HEK293 (cell line): ENCODE measurements at regions of chr17 and their contacts with region 1.

Region 1: GRCh38 chr17:59707114-59707970 is at the starts of genes PTRH2 and VMP1:
- H3K4me3 ChIP-seq: peak within 1 kb of the TSS; percentile 95
- H3K27ac ChIP-seq: peak within 1 kb of the TSS; percentile 90
- H3K4me1 ChIP-seq: peaks cover 16% of the 10 kb centered on the region
- CTCF ChIP-seq: no peak; the same call in 1 of the 2 replicates

Region 2: GRCh38 chr17:59527325-59527917 is 179.9 kb before region 1 on chr17:
- CTCF ChIA-PET with region 1: no interaction called
- POLR2A ChIA-PET with region 1: no interaction called
- H3K4me3 ChIP-seq: no peak overlapping the region
- H3K27ac ChIP-seq: no peak overlapping the region
- H3K4me1 ChIP-seq: no peaks in the 10 kb centered on the region
- CTCF ChIP-seq: no peak

Region 3: GRCh38 chr17:59666235-59666634 is 41.1 kb before region 1 on chr17:
- CTCF ChIA-PET with region 1: no interaction called
- POLR2A ChIA-PET with region 1: no interaction called
- H3K4me3 ChIP-seq: no peak overlapping the region
- H3K27ac ChIP-seq: no peak overlapping the region
- H3K4me1 ChIP-seq: no peaks in the 10 kb centered on the region
- CTCF ChIP-seq: no peak

Region 4: GRCh38 chr17:59964482-59965328 is 257.4 kb after region 1 on chr17 and contains the start of gene RNFT1:
- CTCF ChIA-PET with region 1: no interaction called
- POLR2A ChIA-PET with region 1: interaction called, 11 read pairs
- H3K4me3 ChIP-seq: peak within 1 kb of the TSS; percentile 70
- H3K27ac ChIP-seq: peak within 1 kb of the TSS; percentile 74
- H3K4me1 ChIP-seq: peaks cover 11% of the 10 kb centered on the region; the same call in 1 of the 2 replicates
- CTCF ChIP-seq: no peak